Motor neuron (in vitro differentiated cells): ENCODE measurements at regions of chr19 and their contacts with region 1.

Region 1: DNA sequence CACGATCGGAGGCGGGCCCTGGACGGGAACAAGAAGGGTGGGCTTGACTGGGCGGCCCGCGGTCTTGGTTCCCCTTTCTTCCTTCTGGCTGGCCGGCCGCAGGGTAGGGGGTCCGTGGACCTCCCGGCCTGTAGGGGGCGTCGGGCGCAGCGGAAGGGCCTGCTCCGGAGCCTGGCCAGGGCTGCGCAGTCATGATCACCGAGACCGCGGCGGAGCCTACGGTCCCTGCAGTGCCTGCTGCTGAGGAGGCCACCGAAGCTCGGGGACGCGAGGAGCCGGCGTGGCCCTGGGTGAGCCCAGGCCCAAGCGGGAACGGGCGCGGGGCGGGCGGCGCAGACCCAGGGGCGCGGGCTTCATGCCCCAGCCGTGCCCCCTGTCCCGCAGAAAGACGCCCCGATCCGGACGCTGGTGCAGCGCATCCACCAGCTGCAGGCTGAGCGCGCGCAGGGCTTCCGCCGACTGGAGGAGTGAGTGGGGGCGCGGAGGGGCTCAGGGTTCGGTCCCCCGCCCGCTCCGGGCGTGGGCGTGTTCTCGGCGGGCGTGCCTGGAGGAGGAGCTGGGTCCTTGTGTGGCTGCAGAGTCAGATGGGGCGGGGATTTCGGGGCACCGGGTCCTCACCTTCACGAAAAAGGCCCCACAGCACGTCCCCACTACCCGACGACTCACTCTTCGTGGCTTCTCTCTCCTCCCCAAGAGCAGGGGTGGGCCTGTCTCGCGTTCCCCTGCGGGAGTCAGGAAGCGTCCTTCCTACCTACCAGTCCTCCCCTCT is at the start of gene REX1BD:
- ATAC-seq: peak; percentile 57 to 87 (median 66)
- H3K4me3 ChIP-seq: peak within 1 kb of the TSS; percentile 78 to 96 (median 90)
- H3K27ac ChIP-seq: peak within 1 kb of the TSS; percentile 87 to 88
- H3K4me1 ChIP-seq: peaks cover 3% of the 10 kb centered on the region in 2 donors
- total RNA-seq, gene REX1BD: 39.5 to 76.6 (median 53.9) TPM

Region 2: DNA sequence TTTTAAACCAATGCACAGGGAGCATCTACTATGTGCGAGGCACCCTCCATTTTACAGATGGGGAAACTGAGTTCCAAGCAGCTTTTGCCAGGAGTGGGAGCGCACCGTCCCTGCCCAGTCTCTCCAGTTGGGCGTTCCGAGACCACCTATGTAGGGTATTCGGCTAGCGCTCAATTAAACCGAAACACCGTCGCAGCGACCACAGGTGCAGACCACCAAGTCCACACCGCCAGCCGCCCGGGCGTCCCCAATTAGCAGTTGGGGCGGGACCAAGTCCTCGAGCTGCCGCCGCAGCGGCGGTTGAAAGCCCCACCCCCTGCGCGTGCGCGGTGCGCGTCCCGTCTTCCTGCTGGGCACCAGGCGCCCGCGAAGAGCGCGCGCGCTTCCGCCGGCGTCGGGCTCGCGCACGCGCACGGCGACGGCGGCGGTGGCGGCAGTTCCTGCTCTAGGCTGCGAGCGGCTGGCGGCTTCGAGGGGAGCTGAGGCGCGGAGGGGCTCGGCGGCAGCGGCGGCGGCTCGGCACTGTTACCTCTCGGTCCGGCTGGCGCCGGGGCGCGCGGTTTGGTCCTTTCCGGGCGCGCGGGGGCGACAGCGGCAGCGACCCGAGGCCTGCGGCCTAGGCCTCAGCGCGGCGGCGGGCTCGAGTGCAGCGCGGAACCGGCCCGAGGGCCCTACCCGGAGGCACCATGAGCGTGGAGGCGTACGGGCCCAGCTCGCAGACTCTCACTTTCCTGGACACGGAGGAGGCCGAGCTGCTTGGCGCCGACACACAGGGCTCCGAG is 242.9 kb after region 1 on chr19 and contains the start of gene UPF1:
- in situ Hi-C with region 1: loop called in 3 of 9 experiments (anchors 25 kb)
- ATAC-seq: peak; percentile 80 to 94 (median 92)
- H3K4me3 ChIP-seq: peak within 1 kb of the TSS; percentile 64 to 96 (median 82)
- H3K27ac ChIP-seq: peak within 1 kb of the TSS; percentile 43 to 82
- H3K4me1 ChIP-seq: peaks cover 12 to 16% of the 10 kb centered on the region in 2 donors
- total RNA-seq, gene UPF1: 19.0 to 61.6 (median 28.9) TPM

Region 3: DNA sequence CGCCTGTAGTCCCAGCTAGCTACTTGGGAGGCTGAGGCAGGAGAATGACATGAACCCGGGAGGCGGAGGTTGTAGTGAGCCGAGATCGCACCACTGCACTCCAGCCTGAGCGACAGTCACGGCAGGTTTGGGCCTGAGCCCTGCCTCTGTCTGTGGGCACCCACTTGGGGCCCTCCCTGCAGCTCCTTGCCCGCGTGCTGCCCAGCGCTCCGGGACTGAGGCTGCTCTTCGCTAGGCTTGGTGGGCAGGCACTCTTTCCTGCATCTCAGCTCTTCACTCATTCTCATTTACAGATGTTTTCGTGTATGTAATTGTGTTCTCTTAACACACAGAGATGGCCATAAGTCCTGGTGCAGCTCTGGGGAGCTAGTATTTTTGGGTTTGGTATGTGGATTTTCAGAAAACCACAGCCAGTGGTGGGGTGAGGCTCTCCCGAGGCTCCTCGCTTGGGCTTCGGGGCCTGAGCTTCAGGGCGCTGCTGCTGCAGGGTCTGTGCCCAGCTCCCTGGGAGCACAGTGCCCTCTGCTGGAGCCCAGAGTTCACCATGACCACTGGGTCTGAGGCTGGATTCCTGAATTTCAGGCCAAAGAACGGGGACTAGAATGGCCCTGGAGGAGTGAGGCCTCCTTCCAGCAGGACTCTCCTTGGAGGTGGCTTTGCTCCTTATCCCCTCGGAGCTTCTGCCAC is 258.2 kb after region 1 on chr19:
- in situ Hi-C with region 1: loop called in 6 of 9 experiments (anchors 10 to 25 kb)
- ATAC-seq: peak; percentile 69 to 99 (median 95)
- H3K4me3 ChIP-seq: no peak overlapping the region
- H3K27ac ChIP-seq: no peak overlapping the region
- H3K4me1 ChIP-seq: peaks cover 3 to 20% of the 10 kb centered on the region in 2 donors

Region 4: DNA sequence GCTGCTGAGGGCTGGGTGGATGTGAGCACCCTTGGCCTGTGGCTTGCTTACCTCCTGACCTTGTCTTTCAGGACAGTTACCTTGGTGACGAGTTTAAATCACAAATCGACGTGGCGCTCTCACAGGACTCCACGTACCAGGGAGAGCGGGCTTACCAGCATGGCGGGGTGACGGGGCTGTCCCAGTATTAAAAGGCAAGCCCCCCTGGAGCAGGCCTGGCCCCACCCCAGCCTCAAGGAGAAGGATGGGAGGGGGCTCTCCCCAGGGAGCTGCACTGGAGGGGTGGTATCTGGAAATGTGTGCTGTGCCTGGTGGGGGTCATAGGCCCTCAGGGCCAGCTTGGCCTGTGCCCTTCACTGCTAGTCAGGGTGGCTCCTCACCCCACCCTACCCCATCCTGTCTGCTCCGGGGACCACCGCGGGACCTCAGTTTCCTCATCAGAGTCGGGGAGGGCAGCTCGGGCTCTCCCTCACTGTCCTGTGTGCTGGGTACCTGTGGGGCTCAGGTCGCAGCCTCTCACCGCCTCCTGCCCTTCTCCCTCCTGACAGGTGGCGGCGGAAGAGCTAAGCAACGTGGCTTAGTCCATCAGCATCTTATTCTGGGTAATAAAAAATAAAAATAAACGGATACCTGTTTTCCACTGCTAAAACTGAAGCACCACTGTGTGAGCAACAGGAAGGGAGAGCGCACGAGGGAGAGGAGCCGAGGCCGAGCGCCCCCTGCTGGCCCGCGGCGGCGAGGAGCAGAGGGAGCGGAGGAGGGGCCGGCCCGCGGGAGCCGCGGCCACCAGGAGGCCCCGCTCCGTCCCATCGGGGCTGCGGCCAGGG is 277.4 kb after region 1 on chr19:
- in situ Hi-C with region 1: loop called in 2 of 9 experiments (anchors 25 kb)
- ATAC-seq: peak; percentile 82 to 92 (median 84)
- H3K4me3 ChIP-seq: no peak overlapping the region
- H3K27ac ChIP-seq: no peak overlapping the region
- H3K4me1 ChIP-seq: no peaks in the 10 kb centered on the region

Region 5: GRCh38 chr19:18995804-18996241 is 407.0 kb after region 1 on chr19:
- in situ Hi-C with region 1: loop called in 1 of 9 experiments (anchors 25 kb)
- ATAC-seq: peak; percentile 91 to 99 (median 94)
- H3K4me3 ChIP-seq: no peak overlapping the region
- H3K27ac ChIP-seq: no peak overlapping the region
- H3K4me1 ChIP-seq: peaks cover 0 to 6% of the 10 kb centered on the region in 2 donors